ENCODE measurements at regions of chr17 and their contacts with region 1.

Region 1: GRCh38 chr17:27494192-27495091 is 38.2 kb downstream of the KSR1 start:
- DNase-seq: peak; percentile 23 to 63
- ATAC-seq: peak; percentile 49 to 87 (median 70)
- H3K4me3 ChIP-seq: no peak overlapping the region
- H3K27ac ChIP-seq: peak overlapping the region in 4 of 10 donors; percentile 14 to 73 (median 23)
- H3K4me1 ChIP-seq: peaks cover under 1 to 42% (median 30%) of the 10 kb centered on the region in 9 donors
- H3K27me3 ChIP-seq: no peaks in the 10 kb centered on the region
- CTCF ChIP-seq: peak in 7 of 9 donors; percentile 26 to 61 (median 43)

Region 2: GRCh38 chr17:27153005-27153404 is 341.4 kb before region 1 on chr17:
- intact Hi-C with region 1: no loop called
- DNase-seq: no peak
- ATAC-seq: no peak
- H3K4me3 ChIP-seq: no peak overlapping the region
- H3K27ac ChIP-seq: no peak overlapping the region
- H3K4me1 ChIP-seq: peaks cover 0 to 3% (median 0%) of the 10 kb centered on the region in 9 donors
- H3K27me3 ChIP-seq: no peaks in the 10 kb centered on the region
- CTCF ChIP-seq: no peak

Region 3: GRCh38 chr17:27367121-27367991 is 127.1 kb before region 1 on chr17:
- intact Hi-C with region 1: no loop called
- DNase-seq: no peak
- ATAC-seq: peak in 1 of 8 donors; percentile 65
- H3K4me3 ChIP-seq: no peak overlapping the region
- H3K27ac ChIP-seq: no peak overlapping the region
- H3K4me1 ChIP-seq: peaks cover 0 to 18% (median 0%) of the 10 kb centered on the region in 9 donors
- H3K27me3 ChIP-seq: no peaks in the 10 kb centered on the region
- CTCF ChIP-seq: no peak

Region 4: DNA sequence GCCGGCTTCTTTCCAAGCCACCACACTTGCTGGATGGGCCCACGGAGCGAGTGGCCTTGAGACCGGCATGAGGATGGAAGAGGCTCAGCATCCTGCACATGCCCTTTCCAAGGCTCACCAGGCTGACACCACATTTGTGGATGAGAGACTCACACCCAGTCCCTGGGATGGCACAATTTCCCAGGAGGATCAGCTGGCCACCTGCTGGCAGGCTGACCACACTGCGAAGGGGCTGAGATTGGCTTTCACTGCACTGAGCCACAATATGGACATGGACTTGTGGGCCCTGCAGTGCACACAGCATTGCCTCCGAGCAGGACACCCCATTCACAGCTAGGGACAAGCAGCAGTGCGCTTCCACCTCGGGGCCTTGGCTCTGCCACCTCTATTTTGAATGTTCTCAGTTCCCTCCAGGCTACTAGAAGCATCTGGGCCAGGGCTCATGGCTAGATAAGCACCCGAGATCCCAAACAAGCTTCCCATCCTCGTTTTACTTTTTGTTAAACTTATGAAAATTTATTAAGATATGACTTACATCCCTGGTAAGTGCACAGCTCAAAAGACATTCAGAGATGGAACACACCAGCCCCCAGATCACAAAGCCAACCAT is 63.5 kb before region 1 on chr17:
- intact Hi-C with region 1: loop called in 1 of 10 experiments (anchors 10 kb)
- DNase-seq: peak; percentile 16 to 44
- ATAC-seq: peak in 6 of 8 donors; percentile 49 to 79 (median 68)
- H3K4me3 ChIP-seq: no peak overlapping the region
- H3K27ac ChIP-seq: no peak overlapping the region
- H3K4me1 ChIP-seq: no peaks in the 10 kb centered on the region
- H3K27me3 ChIP-seq: no peaks in the 10 kb centered on the region
- CTCF ChIP-seq: peak in 8 of 9 donors; percentile 14 to 58 (median 54)

Region 5: GRCh38 chr17:27559506-27560481 is 65.4 kb after region 1 on chr17:
- intact Hi-C with region 1: loop called in 2 of 10 experiments (anchors 5 to 10 kb)
- DNase-seq: peak; percentile 73 to 87
- ATAC-seq: peak; percentile 87 to 96 (median 92)
- H3K4me3 ChIP-seq: peak overlapping the region; percentile 11 to 51 (median 42)
- H3K27ac ChIP-seq: peak overlapping the region; percentile 56 to 89 (median 80)
- H3K4me1 ChIP-seq: peaks cover 0 to 66% (median 32%) of the 10 kb centered on the region in 9 donors
- H3K27me3 ChIP-seq: no peaks in the 10 kb centered on the region
- CTCF ChIP-seq: peak in 3 of 9 donors; percentile 15 to 29 (median 21)

Region 6: GRCh38 chr17:27644586-27644985 is 150.1 kb after region 1 on chr17:
- intact Hi-C with region 1: no loop called
- DNase-seq: peak in 1 of 2 donors; percentile 40
- ATAC-seq: peak in 6 of 8 donors; percentile 13 to 80 (median 63)
- H3K4me3 ChIP-seq: no peak overlapping the region
- H3K27ac ChIP-seq: peak overlapping the region in 1 of 10 donors; percentile 31
- H3K4me1 ChIP-seq: peaks cover 0 to 37% (median 11%) of the 10 kb centered on the region in 9 donors
- H3K27me3 ChIP-seq: no peaks in the 10 kb centered on the region
- CTCF ChIP-seq: no peak